ENCODE measurements at regions of chr2 and their contacts with region 1.

Region 1: GRCh38 chr2:177692828-177693269 is 300.3 kb downstream of the AGPS start:
- DNase-seq: no peak
- ATAC-seq: no peak
- H3K4me3 ChIP-seq: no peak overlapping the region
- H3K27ac ChIP-seq: no peak overlapping the region
- H3K4me1 ChIP-seq: no peaks in the 10 kb centered on the region
- H3K27me3 ChIP-seq: no peaks in the 10 kb centered on the region
- CTCF ChIP-seq: no peak
- POLR2A ChIP-seq: no peak

Region 2: GRCh38 chr2:177724398-177725287 is 31.8 kb after region 1 on chr2:
- intact Hi-C with region 1: no loop called
- DNase-seq: peak in 3 of 5 donors; percentile 36 to 53 (median 40)
- ATAC-seq: peak; percentile 64 to 83 (median 74)
- H3K4me3 ChIP-seq: no peak overlapping the region
- H3K27ac ChIP-seq: peak overlapping the region in 2 of 12 donors; percentile 3 to 24
- H3K4me1 ChIP-seq: peaks cover 0 to 9% (median 0%) of the 10 kb centered on the region in 12 donors
- H3K27me3 ChIP-seq: peaks cover 0 to 5% (median 0%) of the 10 kb centered on the region in 9 donors
- CTCF ChIP-seq: peak; percentile 80 to 95 (median 86)
- POLR2A ChIP-seq: no peak

Region 3: DNA sequence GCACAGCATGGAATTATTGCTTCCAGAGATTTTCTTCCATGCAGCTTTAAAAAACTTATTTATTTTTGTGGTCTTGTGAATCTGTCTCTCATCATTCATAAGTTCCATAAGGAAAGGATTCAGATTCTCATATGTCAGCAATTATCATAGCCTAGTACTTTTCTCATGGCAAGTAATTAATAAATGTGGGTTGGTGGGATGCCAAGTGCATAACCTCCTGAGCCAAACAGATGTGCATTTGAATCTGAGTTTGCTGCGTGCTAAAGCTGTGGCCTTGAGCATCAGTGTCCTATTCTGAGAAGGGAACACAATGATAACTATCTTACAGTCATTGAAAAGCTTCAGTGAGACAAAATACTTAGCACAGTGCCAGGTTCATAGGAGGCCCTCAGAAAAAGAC is 47.9 kb after region 1 on chr2:
- intact Hi-C with region 1: loop called in 1 of 10 experiments (anchors 2 kb)
- DNase-seq: no peak
- ATAC-seq: no peak
- H3K4me3 ChIP-seq: no peak overlapping the region
- H3K27ac ChIP-seq: no peak overlapping the region
- H3K4me1 ChIP-seq: peaks cover 0 to 6% (median 1%) of the 10 kb centered on the region in 12 donors
- H3K27me3 ChIP-seq: no peaks in the 10 kb centered on the region
- CTCF ChIP-seq: no peak
- POLR2A ChIP-seq: no peak